Activated CD8-positive, alpha-beta T cell treated with anti-CD3 and anti-CD28 coated beads for 36 hours (primary cell): ENCODE measurements at regions of chr22 and their contacts with region 1.

Region 1: GRCh38 chr22:37933711-37934376 is 19.6 kb downstream of the C22orf23 start:
- DNase-seq: peak; percentile 92
- ATAC-seq: peak; percentile 100
- H3K4me3 Mint-ChIP-seq: no peak overlapping the region
- H3K27ac Mint-ChIP-seq: peak overlapping the region; percentile 25
- H3K4me1 Mint-ChIP-seq: peaks cover 9% of the 10 kb centered on the region
- H3K27me3 Mint-ChIP-seq: no peaks in the 10 kb centered on the region
- CTCF ChIP-seq: peak; percentile 96

Region 2: GRCh38 chr22:37896181-37896592 is 37.7 kb before region 1 on chr22:
- CTCF ChIA-PET with region 1: interaction called, 20 read pairs
- POLR2A ChIA-PET with region 1: no interaction called
- intact Hi-C with region 1: no loop called
- DNase-seq: peak; percentile 70
- ATAC-seq: peak; percentile 97
- H3K4me3 Mint-ChIP-seq: peak overlapping the region; percentile 27
- H3K27ac Mint-ChIP-seq: peak overlapping the region; percentile 91
- H3K4me1 Mint-ChIP-seq: peaks cover 16% of the 10 kb centered on the region
- H3K27me3 Mint-ChIP-seq: no peaks in the 10 kb centered on the region
- CTCF ChIP-seq: no peak

Region 3: DNA sequence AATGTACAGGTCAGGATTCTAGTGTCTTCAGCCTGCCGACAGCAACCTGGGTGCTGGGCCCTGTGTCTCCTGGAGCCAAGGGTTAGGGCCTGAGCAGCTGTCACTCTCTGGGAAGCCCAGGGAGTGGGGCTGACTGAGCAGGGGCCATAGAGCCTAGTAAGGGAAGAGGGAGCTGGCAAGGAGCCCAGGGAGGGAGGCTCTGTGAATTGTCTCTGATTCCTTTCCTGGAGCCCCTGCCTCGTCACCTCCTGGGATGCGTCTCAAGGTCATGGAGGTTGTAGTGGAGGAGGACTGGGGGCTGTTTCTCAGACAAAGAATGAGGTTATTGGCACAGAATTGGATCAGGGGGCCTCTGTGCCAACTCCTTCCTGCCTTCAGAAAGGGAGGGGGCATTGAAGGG is 38.7 kb after region 1 on chr22:
- CTCF ChIA-PET with region 1: no interaction called
- POLR2A ChIA-PET with region 1: no interaction called
- intact Hi-C with region 1: no loop called
- DNase-seq: no peak
- ATAC-seq: no peak
- H3K4me3 Mint-ChIP-seq: no peak overlapping the region
- H3K27ac Mint-ChIP-seq: no peak overlapping the region
- H3K4me1 Mint-ChIP-seq: no peaks in the 10 kb centered on the region
- H3K27me3 Mint-ChIP-seq: no peaks in the 10 kb centered on the region
- CTCF ChIP-seq: no peak

Region 4: GRCh38 chr22:37999956-38000272 is 66.1 kb after region 1 on chr22:
- CTCF ChIA-PET with region 1: no interaction called
- POLR2A ChIA-PET with region 1: no interaction called
- intact Hi-C with region 1: no loop called
- DNase-seq: peak; percentile 14
- ATAC-seq: no peak
- H3K4me3 Mint-ChIP-seq: no peak overlapping the region
- H3K27ac Mint-ChIP-seq: no peak overlapping the region
- H3K4me1 Mint-ChIP-seq: peaks cover 20% of the 10 kb centered on the region
- H3K27me3 Mint-ChIP-seq: no peaks in the 10 kb centered on the region
- CTCF ChIP-seq: no peak

Region 5: GRCh38 chr22:38069372-38070249 is 135.8 kb after region 1 on chr22:
- CTCF ChIA-PET with region 1: no interaction called
- POLR2A ChIA-PET with region 1: no interaction called
- intact Hi-C with region 1: no loop called
- DNase-seq: no peak
- ATAC-seq: no peak
- H3K4me3 Mint-ChIP-seq: no peak overlapping the region
- H3K27ac Mint-ChIP-seq: no peak overlapping the region
- H3K4me1 Mint-ChIP-seq: no peaks in the 10 kb centered on the region
- H3K27me3 Mint-ChIP-seq: no peaks in the 10 kb centered on the region
- CTCF ChIP-seq: no peak